Activated CD8-positive, alpha-beta memory T cell treated with anti-CD3 and anti-CD28 coated beads, Interleukin-2, amount 10 ng/mL, durations not matched to agents 7 days and 5 days (primary cell): ENCODE measurements at regions of chr17 and their contacts with region 1.

Region 1: DNA sequence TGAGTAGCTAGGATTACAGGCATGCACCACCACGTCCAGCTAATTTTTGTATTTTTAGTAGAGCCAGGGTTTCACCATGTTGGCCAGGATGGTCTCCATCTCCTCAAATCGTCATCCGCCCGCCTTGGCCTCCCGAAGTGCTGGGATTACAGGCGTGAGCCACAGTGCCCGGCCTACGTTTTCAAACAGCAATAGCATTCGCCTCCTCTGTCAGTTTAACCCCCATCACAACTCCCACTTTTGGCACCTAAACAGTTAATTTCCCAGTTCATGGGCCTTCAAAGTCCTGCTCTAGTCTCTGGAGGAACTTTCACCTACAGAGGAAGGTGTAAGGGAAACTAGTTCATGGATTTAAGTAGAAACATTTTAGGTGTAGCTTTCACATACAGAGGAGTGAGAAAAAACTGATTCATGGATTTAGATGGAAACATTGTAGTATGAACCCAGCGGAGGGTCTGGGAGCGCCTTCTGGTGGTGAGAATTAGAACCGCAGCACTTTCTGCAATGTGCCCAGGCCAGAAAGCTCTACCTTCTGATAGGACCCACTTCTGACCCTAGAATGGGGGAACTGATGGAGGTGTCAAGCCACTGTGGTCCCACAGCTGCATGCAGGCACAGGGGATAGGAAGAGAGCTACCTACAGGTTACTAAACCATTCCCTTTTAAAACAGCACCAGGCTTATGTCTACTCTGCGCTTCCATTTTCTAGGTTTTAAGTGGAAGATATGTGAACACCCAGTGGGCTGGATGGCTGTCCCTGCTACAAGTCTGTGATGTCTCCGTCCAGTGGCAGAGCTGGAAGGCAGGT is 12.0 kb upstream of the MEOX1 start:
- DNase-seq: peak; percentile 82
- ATAC-seq: peak; percentile 63
- H3K4me3 Mint-ChIP-seq: no peak overlapping the region
- H3K27ac Mint-ChIP-seq: no peak overlapping the region
- H3K4me1 Mint-ChIP-seq: peaks cover 21% of the 10 kb centered on the region
- H3K27me3 Mint-ChIP-seq: peaks cover 35% of the 10 kb centered on the region

Region 2: DNA sequence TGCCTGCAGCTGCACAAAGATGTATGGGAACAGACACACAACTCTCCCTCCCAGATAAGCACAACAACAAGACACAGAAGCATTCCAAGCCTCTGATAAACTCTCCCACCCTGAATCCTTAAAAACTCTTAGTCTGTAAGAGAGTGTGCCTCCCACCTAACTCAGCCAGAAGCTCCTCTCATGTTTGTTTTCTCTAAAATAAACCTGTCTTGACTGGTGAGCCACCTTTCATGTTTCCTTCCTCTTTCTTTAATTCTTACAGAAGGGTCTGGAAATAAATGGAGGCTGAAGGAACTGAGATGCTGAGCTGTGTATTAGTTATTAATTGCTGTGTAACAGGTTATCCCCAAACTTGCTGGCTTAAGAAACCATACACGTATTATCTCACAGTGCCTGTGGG is 69.2 kb before region 1 on chr17:
- CTCF ChIA-PET with region 1: interaction called, 15 read pairs
- DNase-seq: no peak
- ATAC-seq: no peak
- H3K4me3 Mint-ChIP-seq: no peak overlapping the region
- H3K27ac Mint-ChIP-seq: no peak overlapping the region
- H3K4me1 Mint-ChIP-seq: peaks cover 5% of the 10 kb centered on the region
- H3K27me3 Mint-ChIP-seq: peaks cover 23% of the 10 kb centered on the region

Region 3: GRCh38 chr17:43652124-43652480 is 21.6 kb before region 1 on chr17:
- CTCF ChIA-PET with region 1: interaction called, 10 read pairs
- DNase-seq: no peak
- ATAC-seq: no peak
- H3K4me3 Mint-ChIP-seq: no peak overlapping the region
- H3K27ac Mint-ChIP-seq: no peak overlapping the region
- H3K4me1 Mint-ChIP-seq: peaks cover 19% of the 10 kb centered on the region
- H3K27me3 Mint-ChIP-seq: peaks cover 20% of the 10 kb centered on the region

Region 4: DNA sequence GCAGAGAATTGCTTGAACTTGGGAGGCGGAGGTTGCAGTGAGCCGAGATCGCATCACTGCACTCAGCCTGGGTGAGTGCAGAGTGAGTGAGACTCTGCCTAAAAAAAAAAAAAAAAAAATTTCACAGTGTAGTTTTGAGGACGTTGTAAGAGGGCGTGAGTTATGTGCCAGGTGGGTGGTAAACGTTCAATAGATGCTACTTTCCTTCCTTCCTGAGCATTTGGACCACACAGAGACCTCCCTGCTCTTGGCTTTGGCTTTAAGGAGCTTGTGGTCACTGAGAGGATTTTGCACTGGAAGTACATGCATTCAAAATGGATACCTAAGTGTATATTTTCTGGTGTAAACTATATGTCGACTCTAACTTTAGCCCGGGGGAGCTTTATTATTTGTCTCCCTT is 54.4 kb after region 1 on chr17:
- CTCF ChIA-PET with region 1: no interaction called
- DNase-seq: no peak
- ATAC-seq: no peak
- H3K4me3 Mint-ChIP-seq: no peak overlapping the region
- H3K27ac Mint-ChIP-seq: no peak overlapping the region
- H3K4me1 Mint-ChIP-seq: no peaks in the 10 kb centered on the region
- H3K27me3 Mint-ChIP-seq: peaks cover 3% of the 10 kb centered on the region